Adrenal gland (tissue), 19 donors: ENCODE measurements at regions of chr6 and their contacts with region 1.

Region 1: GRCh38 chr6:148947621-148948444 is 201.0 kb downstream of the UST start:
- DNase-seq: peak; percentile 80 to 95 (median 86)
- H3K4me3 ChIP-seq: no peak overlapping the region
- H3K27ac ChIP-seq: no peak overlapping the region
- H3K4me1 ChIP-seq: no peaks in the 10 kb centered on the region
- H3K27me3 ChIP-seq: no peaks in the 10 kb centered on the region
- CTCF ChIP-seq: peak; percentile 80 to 92 (median 87)
- POLR2A ChIP-seq: no peak

Region 2: GRCh38 chr6:148342357-148343046 is 605.3 kb before region 1 on chr6 and contains the start of gene SASH1:
- intact Hi-C with region 1: no loop called
- DNase-seq: peak; percentile 23 to 61 (median 36)
- H3K4me3 ChIP-seq: peak within 1 kb of the TSS in 3 of 4 donors; percentile 26 to 55 (median 40)
- H3K27ac ChIP-seq: peak within 1 kb of the TSS; percentile 7 to 86 (median 53)
- H3K4me1 ChIP-seq: peaks cover 0 to 3% of the 10 kb centered on the region in 2 donors
- H3K27me3 ChIP-seq: no peaks in the 10 kb centered on the region
- CTCF ChIP-seq: no peak
- POLR2A ChIP-seq: no peak
- total RNA-seq, gene SASH1: 6.3 to 30.7 (median 17.3) TPM

Region 3: DNA sequence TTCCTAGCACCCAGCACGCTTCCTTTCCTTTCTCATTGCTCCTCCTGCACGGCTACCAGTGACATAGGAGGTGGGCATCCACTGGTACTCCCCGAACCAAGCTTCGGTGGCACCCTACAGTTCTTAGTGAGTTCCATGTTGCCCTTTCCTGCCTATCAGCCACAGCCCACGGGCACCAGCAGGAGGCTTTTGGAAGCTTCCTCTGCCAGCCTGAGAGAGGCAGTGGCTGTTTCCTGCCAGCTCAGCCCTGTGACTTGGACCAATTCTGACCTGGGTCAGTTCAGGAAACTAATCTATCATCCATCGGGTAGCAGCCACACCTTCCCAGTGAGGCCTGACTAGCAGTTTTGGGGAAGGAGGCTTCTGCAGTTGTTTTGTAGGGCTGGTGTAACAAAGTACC is 377.4 kb before region 1 on chr6:
- intact Hi-C with region 1: loop called (anchors 5 to 10 kb)
- DNase-seq: no peak
- H3K4me3 ChIP-seq: no peak overlapping the region
- H3K27ac ChIP-seq: no peak overlapping the region
- H3K4me1 ChIP-seq: no peaks in the 10 kb centered on the region
- H3K27me3 ChIP-seq: no peaks in the 10 kb centered on the region
- CTCF ChIP-seq: no peak
- POLR2A ChIP-seq: no peak

Region 4: GRCh38 chr6:148578245-148578732 is 369.5 kb before region 1 on chr6:
- intact Hi-C with region 1: loop called (anchors 5 to 10 kb)
- DNase-seq: peak; percentile 78 to 88 (median 82)
- H3K4me3 ChIP-seq: no peak overlapping the region
- H3K27ac ChIP-seq: no peak overlapping the region
- H3K4me1 ChIP-seq: no peaks in the 10 kb centered on the region
- H3K27me3 ChIP-seq: no peaks in the 10 kb centered on the region
- CTCF ChIP-seq: peak; percentile 59 to 93 (median 86)
- POLR2A ChIP-seq: no peak

Region 5: DNA sequence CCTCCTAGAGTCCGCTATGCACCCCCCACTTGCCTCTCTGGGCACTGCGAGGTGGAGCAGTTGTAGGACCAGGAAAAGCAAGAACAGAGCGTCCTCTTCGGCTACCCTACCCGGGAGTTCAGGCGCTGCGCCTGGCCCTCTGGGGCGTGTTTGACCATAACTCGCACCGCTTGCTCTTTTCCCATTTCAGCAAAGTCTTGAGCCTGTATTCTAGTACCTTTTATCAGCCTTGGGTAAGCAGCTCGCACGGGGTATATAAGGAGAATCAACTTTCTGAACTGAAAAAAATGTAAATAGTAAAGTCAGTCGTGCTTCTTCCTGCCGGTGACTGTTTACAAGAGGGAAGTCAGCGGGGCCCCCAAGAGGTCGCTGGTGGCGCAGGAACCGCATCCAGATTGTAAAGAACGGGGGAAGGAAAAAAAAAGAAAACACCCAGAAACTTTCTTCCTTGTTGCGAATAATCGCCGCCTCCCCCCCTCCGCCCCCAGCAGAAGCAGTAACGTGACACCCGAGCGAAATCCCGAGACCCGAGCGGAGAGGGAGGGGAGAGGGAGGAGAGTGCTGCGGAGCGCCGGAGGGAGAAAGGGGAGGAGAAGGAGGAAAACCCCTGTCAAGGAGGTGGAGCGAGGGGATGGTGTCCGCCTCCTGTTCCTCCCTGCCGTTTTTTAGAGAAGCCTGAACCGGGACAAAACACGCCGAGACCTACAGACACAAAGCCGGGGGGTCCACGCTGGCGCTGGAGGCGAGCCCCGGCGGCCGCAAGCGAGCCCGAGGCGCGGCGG is 201.3 kb before region 1 on chr6 and contains the start of gene UST:
- intact Hi-C with region 1: loop called (anchors 5 to 10 kb)
- DNase-seq: peak; percentile 87 to 95 (median 89)
- H3K4me3 ChIP-seq: peak within 1 kb of the TSS; percentile 44 to 88 (median 65)
- H3K27ac ChIP-seq: peak within 1 kb of the TSS; percentile 40 to 94 (median 75)
- H3K4me1 ChIP-seq: peaks cover 5 to 9% of the 10 kb centered on the region in 2 donors
- H3K27me3 ChIP-seq: no peaks in the 10 kb centered on the region
- CTCF ChIP-seq: peak in 5 of 6 experiments; percentile 20 to 53 (median 44)
- POLR2A ChIP-seq: peak in 1 of 2 donors; percentile 85
- total RNA-seq, gene UST: 11.4 to 37.4 (median 19.5) TPM

Region 6: DNA sequence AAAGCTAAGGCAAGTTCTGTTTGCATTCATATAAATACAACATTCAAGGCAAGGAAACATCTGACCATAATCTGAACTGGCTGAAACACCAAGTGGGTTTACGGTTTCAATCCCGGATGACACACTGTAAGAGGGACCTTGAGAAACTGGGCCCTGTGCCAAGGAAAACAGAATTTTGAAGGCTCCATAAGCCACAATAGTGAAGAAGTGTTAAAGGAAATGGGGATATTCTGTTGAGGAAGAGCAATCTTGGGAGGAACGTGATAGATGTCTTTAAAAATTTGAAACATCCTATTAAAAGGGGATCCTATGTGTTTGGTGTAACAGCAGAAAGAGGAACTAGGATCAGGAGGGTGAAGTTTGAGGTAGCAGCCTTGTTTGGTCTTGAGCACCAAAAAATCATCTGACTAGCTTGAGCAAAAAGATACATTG is 287.3 kb after region 1 on chr6:
- intact Hi-C with region 1: no loop called
- DNase-seq: peak; percentile 59 to 81 (median 67)
- H3K4me3 ChIP-seq: no peak overlapping the region
- H3K27ac ChIP-seq: peak overlapping the region in 1 of 5 donors; percentile 35
- H3K4me1 ChIP-seq: peaks cover 12 to 27% of the 10 kb centered on the region in 2 donors
- H3K27me3 ChIP-seq: no peaks in the 10 kb centered on the region
- CTCF ChIP-seq: no peak
- POLR2A ChIP-seq: no peak